ENCODE measurements at regions of chr11 and their contacts with region 1.

Region 1: GRCh38 chr11:65859200-65859811 is 927 bp upstream of the MUS81 start:
- DNase-seq: peak; percentile 99
- H3K4me3 Mint-ChIP-seq: peak overlapping the region; percentile 97
- H3K27ac Mint-ChIP-seq: peak overlapping the region; percentile 100
- H3K4me1 Mint-ChIP-seq: peaks cover 41% of the 10 kb centered on the region
- H3K27me3 Mint-ChIP-seq: no peaks in the 10 kb centered on the region

Region 2: DNA sequence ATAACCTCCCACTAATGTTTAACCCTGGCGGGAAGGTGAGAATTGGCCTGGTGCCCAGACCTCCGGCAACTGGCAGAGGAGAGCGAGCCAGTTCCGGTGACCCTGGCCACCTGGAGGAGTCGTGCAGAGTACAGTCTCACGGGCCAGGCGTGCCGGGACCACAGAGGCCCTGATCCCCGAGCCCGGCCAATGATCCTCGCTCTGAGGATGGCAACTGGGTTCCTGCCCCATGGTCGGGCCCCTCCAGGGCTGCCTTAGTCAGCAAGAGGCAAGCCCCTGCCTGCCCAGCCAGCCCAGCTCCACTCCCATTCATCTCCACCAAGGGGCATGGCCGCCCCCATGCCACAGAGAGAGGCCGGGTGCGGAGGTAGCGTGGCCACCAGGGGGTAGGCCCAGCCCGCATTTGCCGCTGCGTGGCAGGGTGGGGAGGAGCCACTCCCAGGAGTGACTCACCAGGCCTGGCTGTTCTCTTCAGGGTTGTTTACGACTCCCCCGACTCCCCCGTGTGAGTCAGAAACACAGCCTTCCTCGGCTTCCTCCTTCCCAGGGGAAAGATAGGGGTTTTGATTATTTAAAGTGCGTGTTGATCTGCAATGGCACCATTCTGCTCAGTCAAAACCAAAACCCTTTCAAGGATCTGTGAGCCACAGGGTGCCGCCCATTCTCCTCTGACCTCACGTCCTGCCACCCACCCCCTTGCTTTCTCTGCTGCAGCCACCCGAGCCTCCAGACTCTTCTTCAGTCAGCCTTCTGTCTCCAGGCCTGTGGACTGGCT is 477.1 kb before region 1 on chr11 and contains the start of gene SLC25A45:
- CTCF ChIA-PET with region 1: no interaction called
- intact Hi-C with region 1: loop called (anchors 5 kb)
- DNase-seq: peak; percentile 97
- H3K4me3 Mint-ChIP-seq: peak within 1 kb of the TSS; percentile 96
- H3K27ac Mint-ChIP-seq: peak within 1 kb of the TSS; percentile 100
- H3K4me1 Mint-ChIP-seq: peaks cover 48% of the 10 kb centered on the region
- H3K27me3 Mint-ChIP-seq: no peaks in the 10 kb centered on the region
- total RNA-seq, gene SLC25A45: 10.4 to 12.1 TPM

Region 3: DNA sequence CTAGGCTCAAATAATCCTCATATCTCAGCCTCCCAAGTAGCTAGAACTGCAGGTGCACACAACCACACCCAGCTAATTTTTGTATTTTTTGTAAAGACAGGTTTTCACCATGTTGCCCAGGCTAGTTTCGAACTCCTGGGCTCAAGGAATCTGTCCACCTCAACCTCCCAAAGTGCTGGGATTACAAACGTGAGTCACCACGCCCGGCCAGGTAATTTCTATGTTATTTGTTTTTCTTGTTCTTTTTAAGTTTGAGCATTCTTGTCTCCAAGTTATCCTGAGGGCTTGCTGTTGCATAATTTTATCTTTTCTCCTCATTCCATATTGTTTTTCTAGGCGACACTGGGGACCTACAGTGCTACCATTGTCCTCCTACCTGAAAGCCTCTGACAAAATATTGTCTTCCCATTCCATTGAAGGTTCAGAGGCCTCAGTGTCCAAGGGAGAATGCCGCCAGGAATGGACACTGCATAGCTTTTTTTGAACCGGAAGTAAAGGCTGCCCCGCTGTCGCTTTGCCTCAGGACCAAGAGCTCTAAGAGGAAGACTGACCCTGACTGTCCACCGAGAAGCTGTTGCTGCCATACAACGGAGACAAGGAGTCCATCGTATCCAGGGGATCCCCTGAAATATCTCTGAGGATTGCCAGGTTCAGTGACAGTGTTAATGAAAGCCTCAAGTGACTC is 88.3 kb before region 1 on chr11:
- CTCF ChIA-PET with region 1: no interaction called
- intact Hi-C with region 1: no loop called
- DNase-seq: no peak
- H3K4me3 Mint-ChIP-seq: no peak overlapping the region
- H3K27ac Mint-ChIP-seq: no peak overlapping the region
- H3K4me1 Mint-ChIP-seq: peaks cover 7% of the 10 kb centered on the region
- H3K27me3 Mint-ChIP-seq: no peaks in the 10 kb centered on the region

Region 4: DNA sequence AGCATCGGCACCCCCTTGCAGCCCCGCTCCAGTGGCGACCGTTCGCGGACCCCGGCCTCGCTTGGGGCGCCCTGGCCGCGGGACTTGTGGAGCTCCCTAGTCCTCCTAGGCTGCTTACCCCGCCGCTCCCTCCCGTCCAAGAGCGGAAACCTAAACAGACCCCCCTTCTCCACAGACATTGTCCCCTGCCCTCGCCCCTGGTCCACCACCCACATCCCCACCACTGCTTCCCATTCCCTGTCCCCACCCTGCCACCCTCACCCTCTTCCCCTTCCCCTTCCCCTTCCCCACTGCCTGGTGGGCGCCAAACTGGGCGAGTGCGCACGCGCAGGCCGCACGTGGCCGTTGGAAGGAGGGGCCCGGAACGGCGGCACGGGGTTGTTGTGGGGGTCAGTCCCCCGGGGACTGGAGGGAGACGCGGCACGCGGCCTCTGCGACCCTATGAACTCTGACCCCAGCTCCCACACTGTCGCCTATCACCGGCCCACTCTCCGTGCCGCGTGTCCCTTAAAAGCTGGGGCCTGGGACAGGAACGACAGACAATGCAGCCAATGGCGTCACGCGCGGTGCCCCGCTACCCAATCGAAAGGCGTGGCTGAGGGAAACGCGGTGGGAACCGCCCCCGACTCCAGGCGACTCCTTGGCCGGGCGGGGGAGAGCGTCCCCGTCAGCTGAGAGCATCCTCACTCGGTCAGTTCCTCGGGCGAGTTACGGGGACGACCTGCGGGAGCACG is 25.8 kb before region 1 on chr11 and contains the start of gene SNX32:
- CTCF ChIA-PET with region 1: interaction called, 5 read pairs
- intact Hi-C with region 1: loop called (anchors 1 kb)
- DNase-seq: peak; percentile 97
- H3K4me3 Mint-ChIP-seq: no peak within 1 kb of the TSS
- H3K27ac Mint-ChIP-seq: no peak within 1 kb of the TSS
- H3K4me1 Mint-ChIP-seq: peaks cover 22% of the 10 kb centered on the region
- H3K27me3 Mint-ChIP-seq: no peaks in the 10 kb centered on the region
- total RNA-seq, gene SNX32: 1.5 to 2.0 TPM

Region 5: DNA sequence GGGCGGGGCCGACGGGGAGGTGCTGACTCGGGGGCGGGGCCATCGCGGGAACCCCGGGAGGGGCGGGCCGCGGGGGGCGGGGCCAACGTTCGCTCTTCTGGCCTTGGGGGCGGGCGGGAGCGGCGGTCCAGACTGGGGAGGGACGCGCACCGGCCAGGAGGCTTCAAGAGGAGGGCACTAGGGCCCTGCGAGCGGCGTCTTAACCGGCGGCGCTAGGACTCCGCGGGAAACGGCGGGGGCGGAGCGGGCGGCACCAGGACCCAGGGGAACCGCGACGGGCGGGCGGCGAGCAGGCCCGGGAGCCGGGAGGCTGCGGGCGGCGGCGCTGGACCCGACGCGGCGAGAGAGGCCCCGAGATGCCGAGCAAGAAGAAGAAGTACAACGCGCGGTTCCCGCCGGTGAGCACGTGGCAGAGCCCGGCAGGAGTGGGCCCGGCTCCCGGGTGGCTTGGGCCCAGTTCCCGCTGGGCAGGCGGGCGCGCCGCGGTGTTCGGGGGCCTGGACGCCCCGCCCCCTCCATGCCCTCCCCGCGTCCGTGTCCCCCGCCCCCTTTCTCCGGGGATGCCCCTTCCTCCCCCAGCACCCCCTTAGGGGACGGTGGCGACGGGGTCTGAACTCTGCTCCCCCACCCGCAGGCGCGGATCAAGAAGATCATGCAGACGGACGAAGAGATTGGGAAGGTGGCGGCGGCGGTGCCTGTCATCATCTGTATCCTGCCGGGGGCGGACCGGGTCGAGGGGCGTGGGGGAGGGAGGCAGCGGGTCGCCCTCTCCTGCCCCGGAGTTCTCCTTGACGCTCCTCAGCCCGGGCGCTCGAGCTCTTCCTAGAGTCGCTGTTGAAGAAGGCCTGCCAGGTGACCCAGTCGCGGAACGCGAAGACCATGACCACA is 60.1 kb after region 1 on chr11 and contains the start of gene DRAP1:
- CTCF ChIA-PET with region 1: interaction called, 4 read pairs
- intact Hi-C with region 1: loop called (anchors 1 kb)
- DNase-seq: peak; percentile 99
- H3K4me3 Mint-ChIP-seq: peak within 1 kb of the TSS; percentile 93
- H3K27ac Mint-ChIP-seq: peak within 1 kb of the TSS; percentile 84
- H3K4me1 Mint-ChIP-seq: peaks cover 41% of the 10 kb centered on the region
- H3K27me3 Mint-ChIP-seq: no peaks in the 10 kb centered on the region
- total RNA-seq, gene DRAP1: 117 to 134 TPM

Region 6: DNA sequence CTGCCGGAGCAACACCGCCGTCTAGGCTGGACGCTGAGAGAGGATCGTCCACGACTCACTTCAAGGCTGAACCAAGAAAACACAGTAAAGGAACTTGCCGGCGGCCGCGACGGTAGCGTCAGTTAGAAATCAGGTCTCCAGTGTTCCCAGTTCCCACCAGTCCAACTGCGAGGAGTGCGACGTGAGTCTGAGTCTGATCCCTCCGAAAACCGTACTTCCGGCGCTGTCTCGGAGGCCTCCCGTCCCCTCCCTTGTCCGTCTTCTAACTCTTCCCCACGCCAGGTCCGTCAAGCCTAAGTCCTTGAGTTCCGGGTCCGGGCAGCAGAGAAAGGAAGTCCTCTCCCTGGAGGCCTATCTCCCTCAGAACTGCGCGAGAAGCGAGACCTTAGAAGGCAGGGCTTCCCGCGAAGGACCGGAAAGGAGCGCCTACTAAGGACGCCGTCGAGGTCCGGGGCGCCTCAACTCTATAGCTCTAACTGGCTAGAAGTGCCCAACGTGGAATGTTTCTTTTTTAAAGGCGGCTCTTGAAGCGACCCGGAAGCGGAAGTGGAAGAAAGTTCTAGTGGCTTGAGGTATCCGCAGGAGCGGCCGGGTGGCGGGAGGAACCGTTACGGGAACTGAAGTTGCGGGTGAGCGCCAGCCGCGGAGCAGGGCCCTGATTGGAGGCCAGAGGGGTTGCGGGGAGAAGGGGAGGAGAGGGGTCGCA is 142.8 kb after region 1 on chr11 and contains the starts of genes BANF1 and EIF1AD:
- CTCF ChIA-PET with region 1: no interaction called
- intact Hi-C with region 1: loop called (anchors 1 kb)
- DNase-seq: peak; percentile 96
- H3K4me3 Mint-ChIP-seq: peak within 1 kb of the TSS; percentile 99
- H3K27ac Mint-ChIP-seq: peak within 1 kb of the TSS; percentile 99
- H3K4me1 Mint-ChIP-seq: peaks cover 44% of the 10 kb centered on the region
- H3K27me3 Mint-ChIP-seq: no peaks in the 10 kb centered on the region
- total RNA-seq, gene BANF1: 347 to 369 TPM
- total RNA-seq, gene EIF1AD: 31.2 to 31.7 TPM